Activated CD4-positive, alpha-beta memory T cell treated with anti-CD3 and anti-CD28 coated beads, Interleukin-2, amount 10 ng/mL, durations not matched to agents 7 days and 5 days (primary cell): ENCODE measurements at regions of chr6 and their contacts with region 1.

Region 1: DNA sequence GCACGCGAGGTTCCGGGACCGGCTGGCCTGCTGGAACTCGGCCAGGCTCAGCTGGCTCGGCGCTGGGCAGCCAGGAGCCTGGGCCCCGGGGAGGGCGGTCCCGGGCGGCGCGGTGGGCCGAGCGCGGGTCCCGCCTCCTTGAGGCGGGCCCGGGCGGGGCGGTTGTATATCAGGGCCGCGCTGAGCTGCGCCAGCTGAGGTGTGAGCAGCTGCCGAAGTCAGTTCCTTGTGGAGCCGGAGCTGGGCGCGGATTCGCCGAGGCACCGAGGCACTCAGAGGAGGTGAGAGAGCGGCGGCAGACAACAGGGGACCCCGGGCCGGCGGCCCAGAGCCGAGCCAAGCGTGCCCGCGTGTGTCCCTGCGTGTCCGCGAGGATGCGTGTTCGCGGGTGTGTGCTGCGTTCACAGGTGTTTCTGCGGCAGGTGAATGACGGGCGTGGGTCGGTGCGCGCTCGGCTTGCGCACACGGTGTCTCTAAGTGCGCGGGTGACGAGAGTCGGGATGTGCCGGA is at the start of gene CDKN1A:
- DNase-seq: peak; percentile 85
- H3K4me3 Mint-ChIP-seq: peak within 1 kb of the TSS; percentile 95
- H3K27ac Mint-ChIP-seq: peak within 1 kb of the TSS; percentile 97
- H3K4me1 Mint-ChIP-seq: peaks cover 56% of the 10 kb centered on the region
- H3K27me3 Mint-ChIP-seq: no peaks in the 10 kb centered on the region
- total RNA-seq, gene CDKN1A: 107 to 109 TPM

Region 2: GRCh38 chr6:36662827-36663362 is 15.7 kb before region 1 on chr6:
- CTCF ChIA-PET with region 1: no interaction called
- POLR2A ChIA-PET with region 1: interaction called, 11 read pairs
- DNase-seq: no peak
- H3K4me3 Mint-ChIP-seq: no peak overlapping the region
- H3K27ac Mint-ChIP-seq: no peak overlapping the region
- H3K4me1 Mint-ChIP-seq: peaks cover 19% of the 10 kb centered on the region
- H3K27me3 Mint-ChIP-seq: peaks cover 18% of the 10 kb centered on the region

Region 3: GRCh38 chr6:36692220-36692619 is 13.6 kb after region 1 on chr6:
- CTCF ChIA-PET with region 1: interaction called, 11 read pairs
- POLR2A ChIA-PET with region 1: interaction called, 77 read pairs
- DNase-seq: peak; percentile 82
- H3K4me3 Mint-ChIP-seq: peak overlapping the region; percentile 8
- H3K27ac Mint-ChIP-seq: peak overlapping the region; percentile 86
- H3K4me1 Mint-ChIP-seq: peaks cover 68% of the 10 kb centered on the region
- H3K27me3 Mint-ChIP-seq: no peaks in the 10 kb centered on the region